ENCODE measurements at regions of chr10 and their contacts with region 1.

Region 1: GRCh38 chr10:24202181-24202570 is 6.8 kb upstream of the KIAA1217 start:
- DNase-seq: no peak
- ATAC-seq: peak in 1 of 4 donors; percentile 19
- H3K4me3 ChIP-seq: no peak overlapping the region
- H3K27ac ChIP-seq: peak overlapping the region in 4 of 12 donors; percentile 2 to 59 (median 36)
- H3K4me1 ChIP-seq: peaks cover 4 to 37% (median 16%) of the 10 kb centered on the region in 12 donors
- H3K27me3 ChIP-seq: no peaks in the 10 kb centered on the region
- CTCF ChIP-seq: no peak
- POLR2A ChIP-seq: no peak

Region 2: GRCh38 chr10:23158370-23158769 is 1043.8 kb before region 1 on chr10:
- intact Hi-C with region 1: loop called in 2 of 10 experiments (anchors 5 to 10 kb)
- DNase-seq: no peak
- ATAC-seq: peak in 3 of 4 donors; percentile 70 to 80 (median 74)
- H3K4me3 ChIP-seq: no peak overlapping the region
- H3K27ac ChIP-seq: no peak overlapping the region
- H3K4me1 ChIP-seq: peaks cover 0 to 5% (median 0%) of the 10 kb centered on the region in 12 donors
- H3K27me3 ChIP-seq: peaks cover 0 to 26% (median 5%) of the 10 kb centered on the region in 9 donors
- CTCF ChIP-seq: peak; percentile 62 to 83 (median 74)
- POLR2A ChIP-seq: no peak

Region 3: DNA sequence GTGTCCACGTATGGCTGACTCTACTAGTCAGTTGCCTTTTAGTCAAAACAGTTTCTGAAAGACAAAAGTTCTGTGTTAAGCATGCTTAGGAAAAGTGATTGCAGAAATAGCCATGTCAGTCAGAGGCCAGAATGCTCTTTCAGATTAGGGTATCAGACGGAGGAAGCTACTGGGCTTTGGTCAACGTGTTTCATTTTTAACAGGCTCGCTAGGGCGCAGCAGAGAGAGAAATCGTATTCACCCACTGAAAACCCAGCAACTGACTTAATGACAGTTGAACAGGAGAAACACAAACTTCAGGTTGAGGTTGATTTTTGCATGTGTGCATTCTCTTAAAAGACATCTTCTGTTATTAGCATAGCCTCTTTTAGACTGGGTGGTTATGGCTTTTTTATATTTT is 315.8 kb before region 1 on chr10:
- intact Hi-C with region 1: loop called in 1 of 10 experiments (anchors 2 kb)
- DNase-seq: no peak
- ATAC-seq: no peak
- H3K4me3 ChIP-seq: no peak overlapping the region
- H3K27ac ChIP-seq: no peak overlapping the region
- H3K4me1 ChIP-seq: peaks cover 0 to 4% (median 0%) of the 10 kb centered on the region in 12 donors
- H3K27me3 ChIP-seq: peaks cover 0 to 3% (median 0%) of the 10 kb centered on the region in 9 donors
- CTCF ChIP-seq: peak in 9 of 12 donors; percentile 8 to 38 (median 15)
- POLR2A ChIP-seq: no peak

Region 4: DNA sequence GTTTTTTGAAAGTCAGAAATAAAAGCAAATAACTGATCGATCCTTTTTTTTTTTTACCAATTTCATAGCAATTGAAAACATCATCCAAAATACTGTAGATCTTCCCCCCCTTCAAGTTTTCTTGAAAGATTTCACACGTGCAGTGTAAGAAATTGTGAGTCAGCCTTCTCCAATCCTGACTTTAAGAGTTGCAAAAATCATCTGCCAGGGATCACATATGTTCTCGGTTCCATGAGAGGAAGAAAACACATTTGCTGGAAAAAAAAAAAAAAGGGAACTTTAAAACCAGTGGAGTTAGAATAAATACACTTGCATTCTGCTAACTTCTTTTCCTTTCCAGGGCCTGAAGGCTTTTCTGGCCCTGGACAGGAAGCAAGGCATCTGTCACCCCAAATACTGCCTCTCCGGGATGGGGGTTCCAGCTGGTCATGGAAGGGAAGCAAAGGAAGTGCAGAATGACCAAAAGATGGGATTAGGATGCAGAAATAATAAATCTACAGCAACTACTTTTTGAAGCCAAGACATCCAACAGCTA is 191.7 kb before region 1 on chr10:
- intact Hi-C with region 1: no loop called
- DNase-seq: no peak
- ATAC-seq: no peak
- H3K4me3 ChIP-seq: no peak overlapping the region
- H3K27ac ChIP-seq: no peak overlapping the region
- H3K4me1 ChIP-seq: peaks cover 0 to 23% (median 10%) of the 10 kb centered on the region in 12 donors
- H3K27me3 ChIP-seq: no peaks in the 10 kb centered on the region
- CTCF ChIP-seq: no peak
- POLR2A ChIP-seq: no peak

Region 5: DNA sequence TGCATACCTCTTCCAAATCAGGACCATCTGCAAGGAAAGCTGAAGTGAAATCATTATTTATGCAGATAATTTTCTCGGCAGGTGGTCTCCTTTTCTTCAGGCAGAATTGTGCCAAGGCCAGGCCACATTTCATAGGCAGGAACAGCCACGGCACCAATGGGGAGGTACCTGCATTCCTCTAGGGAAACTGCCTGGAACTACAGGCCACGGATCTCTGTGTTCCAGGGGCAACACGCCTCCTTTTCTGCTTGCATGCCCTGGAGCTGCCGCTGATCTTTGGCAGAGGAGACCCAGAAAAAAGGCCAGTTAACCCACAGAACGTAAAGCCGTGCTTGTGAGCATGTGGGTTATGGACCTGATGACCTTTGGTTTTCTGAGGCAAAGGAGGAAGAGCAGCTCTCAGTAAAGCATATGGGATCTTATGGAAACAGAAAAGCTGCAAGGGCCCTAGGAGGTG is 104.4 kb before region 1 on chr10:
- intact Hi-C with region 1: loop called in 1 of 10 experiments (anchors 2 kb)
- DNase-seq: no peak
- ATAC-seq: no peak
- H3K4me3 ChIP-seq: no peak overlapping the region
- H3K27ac ChIP-seq: no peak overlapping the region
- H3K4me1 ChIP-seq: peaks cover 0 to 9% (median 0%) of the 10 kb centered on the region in 12 donors
- H3K27me3 ChIP-seq: no peaks in the 10 kb centered on the region
- CTCF ChIP-seq: no peak
- POLR2A ChIP-seq: no peak

Region 6: DNA sequence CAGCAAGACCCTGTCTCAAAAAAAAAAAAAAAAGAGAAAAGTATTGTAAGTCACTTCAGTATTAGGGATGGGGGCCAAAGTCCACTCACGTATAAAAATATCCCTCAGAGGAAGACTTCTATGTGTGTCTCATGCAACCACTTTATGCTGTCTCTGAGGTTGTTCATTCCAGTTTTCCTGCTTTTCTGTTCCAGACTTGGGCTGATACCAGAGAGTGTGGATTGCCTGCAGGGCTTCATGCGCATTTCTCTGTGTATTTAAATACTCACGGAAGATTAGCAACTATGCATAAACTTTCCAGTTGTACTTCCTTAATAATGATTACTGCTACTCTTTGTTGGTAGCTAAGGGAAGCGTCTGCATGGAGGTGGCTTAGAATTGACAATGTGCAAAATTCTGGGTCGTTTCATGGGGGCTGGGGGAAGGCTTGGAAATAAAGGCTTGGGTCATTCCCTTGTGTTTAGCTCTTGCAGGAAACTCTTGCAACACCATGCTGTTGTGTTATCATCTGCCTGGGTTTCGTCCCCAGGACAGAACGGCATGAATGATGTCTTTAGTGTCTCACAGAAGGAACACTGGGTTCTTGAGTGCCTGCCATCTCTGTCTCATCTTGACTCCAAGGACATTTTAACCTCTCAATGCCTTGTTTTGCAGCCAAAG is 60.9 kb after region 1 on chr10:
- intact Hi-C with region 1: no loop called
- DNase-seq: peak in 1 of 5 donors; percentile 38
- ATAC-seq: peak in 3 of 4 donors; percentile 34 to 64 (median 63)
- H3K4me3 ChIP-seq: no peak overlapping the region
- H3K27ac ChIP-seq: peak overlapping the region in 1 of 12 donors; percentile 1
- H3K4me1 ChIP-seq: peaks cover 0 to 47% (median 25%) of the 10 kb centered on the region in 12 donors
- H3K27me3 ChIP-seq: no peaks in the 10 kb centered on the region
- CTCF ChIP-seq: no peak
- POLR2A ChIP-seq: no peak

Region 7: GRCh38 chr10:24360282-24361127 is 158.3 kb after region 1 on chr10:
- intact Hi-C with region 1: loop called in 9 of 10 experiments (anchors 2 to 5 kb)
- DNase-seq: peak in 4 of 5 donors; percentile 67 to 75 (median 69)
- ATAC-seq: peak in 3 of 4 donors; percentile 60 to 83 (median 78)
- H3K4me3 ChIP-seq: no peak overlapping the region
- H3K27ac ChIP-seq: no peak overlapping the region
- H3K4me1 ChIP-seq: peaks cover 0 to 18% (median 3%) of the 10 kb centered on the region in 12 donors
- H3K27me3 ChIP-seq: no peaks in the 10 kb centered on the region
- CTCF ChIP-seq: peak; percentile 49 to 85 (median 75)
- POLR2A ChIP-seq: no peak

Region 8: DNA sequence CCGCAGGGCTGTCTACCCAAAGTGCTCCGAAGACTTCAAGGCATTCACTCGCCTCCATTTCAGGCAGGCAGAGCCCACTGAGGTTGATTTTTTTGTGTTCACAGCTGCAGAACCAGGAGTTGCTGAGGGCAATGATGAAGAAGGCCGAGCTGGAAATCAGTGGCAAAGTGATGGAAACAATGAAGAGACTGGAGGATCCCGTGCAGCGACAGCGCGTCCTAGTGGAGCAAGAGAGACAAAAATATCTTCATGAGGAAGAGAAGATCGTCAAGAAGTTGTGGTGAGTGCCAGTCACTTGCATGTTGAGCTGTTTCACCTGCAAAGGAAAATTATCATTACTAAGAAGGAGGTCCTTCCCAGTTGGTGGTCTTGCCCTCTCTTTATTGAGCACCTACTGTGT is 311.0 kb after region 1 on chr10:
- intact Hi-C with region 1: loop called in 6 of 10 experiments (anchors 5 to 10 kb)
- DNase-seq: no peak
- ATAC-seq: no peak
- H3K4me3 ChIP-seq: no peak overlapping the region
- H3K27ac ChIP-seq: no peak overlapping the region
- H3K4me1 ChIP-seq: no peaks in the 10 kb centered on the region
- H3K27me3 ChIP-seq: no peaks in the 10 kb centered on the region
- CTCF ChIP-seq: peak in 6 of 12 donors; percentile 12 to 38 (median 26)
- POLR2A ChIP-seq: no peak